ENCODE measurements at regions of chr19 and their contacts with region 1.

Region 1: DNA sequence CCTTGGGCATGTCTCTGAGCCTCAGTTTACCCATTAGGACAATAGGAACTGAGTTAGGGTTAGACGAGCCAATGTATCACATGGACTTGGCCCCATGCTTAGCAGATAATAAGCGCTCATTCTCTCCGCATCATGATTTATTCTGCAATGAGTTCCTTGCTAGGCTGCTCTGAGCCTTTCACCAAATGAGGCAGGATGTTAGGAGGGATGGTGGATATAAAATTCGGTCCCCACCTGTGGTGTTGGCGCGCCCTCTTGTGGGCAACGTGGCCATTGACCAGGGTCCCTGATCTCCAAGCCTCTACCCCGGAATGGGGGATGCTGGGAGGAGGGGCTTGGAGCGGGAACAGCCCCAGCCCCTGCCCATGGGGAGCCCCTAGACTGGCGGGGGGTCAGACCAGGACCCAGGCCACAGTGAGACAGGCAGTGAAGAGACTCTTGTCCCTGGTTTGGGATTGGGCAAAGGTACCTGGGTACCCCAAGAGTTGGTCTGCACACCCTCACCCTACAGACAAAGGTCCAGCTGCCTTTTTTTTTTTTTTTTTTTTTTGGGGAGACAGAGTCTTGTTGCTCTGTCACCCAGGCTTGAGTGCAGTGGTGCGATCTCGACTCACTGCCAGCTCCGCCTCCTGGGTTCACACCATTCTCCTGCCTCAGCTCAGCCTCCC is 43.9 kb downstream of the CERS4 start:
- DNase-seq: peak; percentile 89
- H3K4me3 ChIP-seq: no peak overlapping the region
- H3K27ac ChIP-seq: no peak overlapping the region
- H3K4me1 ChIP-seq: no peaks in the 10 kb centered on the region
- H3K27me3 ChIP-seq: no peaks in the 10 kb centered on the region
- CTCF ChIP-seq: peak; percentile 95

Region 2: GRCh38 chr19:7852851-7853769 is 399.9 kb before region 1 on chr19:
- CTCF ChIA-PET with region 1: no interaction called
- POLR2A ChIA-PET with region 1: no interaction called
- intact Hi-C with region 1: loop called (anchors 10 kb)
- DNase-seq: peak; percentile 73
- H3K4me3 ChIP-seq: no peak overlapping the region
- H3K27ac ChIP-seq: no peak overlapping the region
- H3K4me1 ChIP-seq: no peaks in the 10 kb centered on the region
- H3K27me3 ChIP-seq: no peaks in the 10 kb centered on the region
- CTCF ChIP-seq: peak; percentile 92

Region 3: DNA sequence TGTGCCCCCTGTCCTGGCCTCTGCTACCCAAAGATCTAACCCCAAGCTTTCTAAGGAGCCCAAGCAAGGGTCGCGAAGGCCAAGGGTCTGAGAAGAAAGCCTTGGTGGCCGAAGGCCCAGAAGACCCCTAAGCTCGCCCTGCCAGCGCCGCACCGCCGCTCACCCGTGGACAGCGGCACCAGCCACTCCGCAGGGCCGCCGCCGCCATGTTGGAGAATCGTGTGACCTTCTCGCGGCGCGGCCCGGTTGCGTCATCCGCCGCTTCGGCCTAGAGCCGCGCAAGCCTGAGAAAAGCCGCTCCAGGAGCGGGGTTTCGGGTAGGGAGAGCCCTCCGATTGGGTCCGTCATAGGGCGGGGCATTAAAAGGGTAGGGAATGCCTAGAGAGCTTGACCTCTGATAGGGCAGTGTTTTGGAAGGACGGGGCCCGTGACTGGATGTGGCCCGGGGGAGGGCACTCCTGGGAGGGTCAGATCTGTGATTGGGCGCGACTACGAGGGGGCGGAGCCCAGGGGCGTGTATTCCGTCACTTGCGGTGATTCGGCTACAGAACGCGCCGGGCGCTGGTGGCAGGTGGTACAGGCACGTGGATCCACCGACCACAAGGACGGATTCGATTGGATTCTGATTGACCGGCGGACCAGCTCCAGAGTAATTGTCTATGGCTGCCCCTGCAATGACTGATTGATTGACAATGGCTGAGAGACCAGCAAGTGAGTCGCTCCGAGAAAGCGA is 309.4 kb before region 1 on chr19 and contains the start of gene TIMM44:
- CTCF ChIA-PET with region 1: interaction called, 19 read pairs
- POLR2A ChIA-PET with region 1: no interaction called
- intact Hi-C with region 1: loop called (anchors 1 kb)
- DNase-seq: peak; percentile 100
- H3K4me3 ChIP-seq: peak within 1 kb of the TSS; percentile 94
- H3K27ac ChIP-seq: peak within 1 kb of the TSS; percentile 99
- H3K4me1 ChIP-seq: peaks cover 3% of the 10 kb centered on the region
- H3K27me3 ChIP-seq: no peaks in the 10 kb centered on the region
- CTCF ChIP-seq: no peak
- total RNA-seq, gene TIMM44: 153 and 169 TPM in 2 replicates

Region 4: DNA sequence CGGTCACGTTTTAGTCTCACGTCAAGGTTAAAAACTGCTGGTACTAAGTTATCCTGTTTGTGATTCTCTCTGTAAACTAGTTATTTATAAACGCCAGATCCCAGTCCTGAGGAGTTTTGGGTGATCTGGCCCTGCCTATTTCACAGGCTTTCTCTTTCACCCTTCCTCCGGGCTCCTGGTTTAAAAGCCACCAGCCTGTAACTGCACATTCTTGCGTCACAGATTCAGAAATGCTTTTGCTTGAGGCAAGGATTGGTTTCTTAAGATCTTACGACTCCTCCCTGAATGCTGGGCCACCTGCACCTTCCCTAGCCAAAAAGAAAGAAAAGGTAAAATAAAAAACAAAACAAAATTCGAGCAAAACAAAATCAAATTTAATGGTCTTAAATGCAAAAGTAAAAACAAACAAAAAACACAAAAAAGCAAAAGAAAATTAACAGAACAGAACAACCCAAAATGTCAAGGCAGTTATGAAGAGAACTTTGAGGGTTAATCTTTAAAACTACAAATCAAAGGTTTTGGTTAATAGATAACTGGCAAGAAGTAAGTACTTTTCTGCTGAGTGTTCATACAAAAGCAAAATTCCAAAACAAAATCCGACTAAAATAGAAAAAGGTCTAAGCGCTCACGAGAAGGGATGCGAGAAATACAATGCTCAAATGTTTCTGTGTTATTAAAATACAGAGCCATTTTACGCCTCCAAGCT is 291.0 kb before region 1 on chr19:
- CTCF ChIA-PET with region 1: interaction called, 13 read pairs
- POLR2A ChIA-PET with region 1: no interaction called
- intact Hi-C with region 1: no loop called
- DNase-seq: no peak
- H3K4me3 ChIP-seq: no peak overlapping the region
- H3K27ac ChIP-seq: no peak overlapping the region
- H3K4me1 ChIP-seq: no peaks in the 10 kb centered on the region
- H3K27me3 ChIP-seq: no peaks in the 10 kb centered on the region
- CTCF ChIP-seq: no peak

Region 5: GRCh38 chr19:7970716-7971448 is 282.2 kb before region 1 on chr19:
- CTCF ChIA-PET with region 1: interaction called, 21 read pairs
- POLR2A ChIA-PET with region 1: no interaction called
- intact Hi-C with region 1: no loop called
- DNase-seq: peak; percentile 67
- H3K4me3 ChIP-seq: no peak overlapping the region
- H3K27ac ChIP-seq: no peak overlapping the region
- H3K4me1 ChIP-seq: no peaks in the 10 kb centered on the region
- H3K27me3 ChIP-seq: no peaks in the 10 kb centered on the region
- CTCF ChIP-seq: peak; percentile 85

Region 6: DNA sequence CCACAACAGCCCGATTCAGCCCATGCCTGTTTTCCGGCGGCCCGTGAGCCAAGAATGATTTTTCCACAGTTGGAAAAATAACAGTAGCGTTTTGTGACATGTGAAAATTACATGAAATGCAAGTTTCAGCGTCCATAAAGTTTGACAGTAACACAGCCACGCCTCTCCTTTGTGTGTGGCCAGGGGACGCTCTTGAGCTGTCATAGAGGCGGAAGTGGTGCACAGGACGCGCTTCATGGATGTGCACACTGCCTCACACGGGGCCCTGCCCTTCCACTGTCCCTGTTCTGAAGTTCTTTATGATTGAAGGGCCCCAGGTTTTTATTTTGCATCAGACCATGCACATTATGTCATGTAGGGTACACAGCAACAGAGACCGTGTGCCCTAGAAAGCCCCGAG is 235.2 kb before region 1 on chr19:
- CTCF ChIA-PET with region 1: interaction called, 4 read pairs
- POLR2A ChIA-PET with region 1: no interaction called
- intact Hi-C with region 1: loop called (anchors 5 kb)
- DNase-seq: peak; percentile 39
- H3K4me3 ChIP-seq: no peak overlapping the region
- H3K27ac ChIP-seq: no peak overlapping the region
- H3K4me1 ChIP-seq: no peaks in the 10 kb centered on the region
- H3K27me3 ChIP-seq: no peaks in the 10 kb centered on the region
- CTCF ChIP-seq: peak; percentile 58

Region 7: GRCh38 chr19:8158411-8159074 is 94.5 kb before region 1 on chr19:
- CTCF ChIA-PET with region 1: no interaction called
- POLR2A ChIA-PET with region 1: no interaction called
- intact Hi-C with region 1: loop called (anchors 2 kb)
- DNase-seq: peak; percentile 78
- H3K4me3 ChIP-seq: no peak overlapping the region
- H3K27ac ChIP-seq: no peak overlapping the region
- H3K4me1 ChIP-seq: peaks cover 18% of the 10 kb centered on the region
- H3K27me3 ChIP-seq: no peaks in the 10 kb centered on the region
- CTCF ChIP-seq: peak; percentile 69

Region 8: DNA sequence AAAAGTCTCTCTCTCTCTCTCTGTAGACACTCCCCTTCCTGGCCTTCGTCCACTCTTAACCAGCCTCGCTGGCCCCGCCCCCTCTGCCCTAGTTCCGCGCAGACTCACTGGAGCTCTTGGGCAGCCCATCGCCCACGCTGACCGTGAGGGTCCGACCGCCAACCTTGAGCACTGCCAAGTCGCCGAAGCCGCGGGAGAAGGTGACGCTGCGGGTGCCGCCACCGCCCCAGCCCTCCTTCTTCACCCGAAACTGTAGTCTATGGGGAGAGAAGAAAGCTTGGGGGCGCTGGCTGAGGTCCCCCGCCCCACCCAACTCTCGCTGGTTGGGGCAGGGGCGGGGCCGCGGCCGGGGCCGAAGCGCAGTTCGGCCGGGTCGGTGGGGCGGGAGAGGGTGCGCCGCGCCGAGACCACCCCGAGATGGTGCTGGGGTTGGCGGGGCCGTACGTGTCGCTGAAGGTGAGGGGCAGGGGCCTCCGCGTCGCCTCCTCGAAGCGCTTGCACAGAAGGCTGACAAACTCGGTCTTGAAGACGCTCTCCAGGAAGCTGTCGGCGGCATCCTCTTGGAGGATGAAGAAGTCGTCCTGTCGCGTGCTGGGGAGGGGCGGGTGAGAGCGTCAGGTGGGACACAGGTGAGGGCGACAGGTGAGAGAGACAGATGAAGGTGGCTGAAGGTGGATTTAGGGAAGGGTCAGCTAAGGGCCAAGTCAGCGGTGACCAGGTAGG is 273.4 kb after region 1 on chr19:
- CTCF ChIA-PET with region 1: no interaction called
- POLR2A ChIA-PET with region 1: no interaction called
- intact Hi-C with region 1: no loop called
- DNase-seq: peak; percentile 94
- H3K4me3 ChIP-seq: peak overlapping the region; percentile 79
- H3K27ac ChIP-seq: peak overlapping the region; percentile 96
- H3K4me1 ChIP-seq: peaks cover 6% of the 10 kb centered on the region
- H3K27me3 ChIP-seq: no peaks in the 10 kb centered on the region
- CTCF ChIP-seq: no peak

Region 9: DNA sequence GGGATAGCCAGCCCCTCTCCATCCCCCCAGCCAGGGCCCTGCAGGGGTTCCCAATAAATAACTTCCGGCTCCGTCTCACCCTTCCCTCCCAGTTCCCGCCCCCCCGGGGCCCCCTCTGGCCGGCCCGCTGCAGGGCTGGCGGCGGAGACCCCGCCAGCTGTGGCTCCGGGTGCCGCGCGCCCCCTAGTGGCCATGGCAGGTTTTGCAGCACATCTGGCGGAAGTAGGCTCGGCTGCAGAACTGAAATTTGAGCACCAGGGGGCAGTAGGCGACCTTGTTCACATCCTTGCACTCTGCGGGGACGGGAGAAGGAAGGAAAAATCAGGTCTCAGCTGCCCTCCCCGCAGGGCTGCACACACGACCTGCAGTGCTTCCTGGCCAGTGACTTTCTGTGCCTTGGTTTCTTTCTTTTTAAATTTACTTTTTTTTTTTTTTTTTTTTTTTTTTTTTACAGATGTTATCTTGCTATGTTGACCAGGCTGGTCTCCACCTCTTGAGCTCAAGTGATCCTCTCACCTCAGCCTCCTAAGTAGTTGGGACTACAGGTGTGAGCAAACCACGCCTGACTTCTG is 327.7 kb after region 1 on chr19:
- CTCF ChIA-PET with region 1: no interaction called
- POLR2A ChIA-PET with region 1: no interaction called
- intact Hi-C with region 1: no loop called
- DNase-seq: peak; percentile 86
- H3K4me3 ChIP-seq: no peak overlapping the region
- H3K27ac ChIP-seq: no peak overlapping the region
- H3K4me1 ChIP-seq: peaks cover 9% of the 10 kb centered on the region
- H3K27me3 ChIP-seq: no peaks in the 10 kb centered on the region
- CTCF ChIP-seq: peak; percentile 99

Measured in A673 (cell line).